ENCODE measurements at regions of chr1 and their contacts with region 1.

Region 1: DNA sequence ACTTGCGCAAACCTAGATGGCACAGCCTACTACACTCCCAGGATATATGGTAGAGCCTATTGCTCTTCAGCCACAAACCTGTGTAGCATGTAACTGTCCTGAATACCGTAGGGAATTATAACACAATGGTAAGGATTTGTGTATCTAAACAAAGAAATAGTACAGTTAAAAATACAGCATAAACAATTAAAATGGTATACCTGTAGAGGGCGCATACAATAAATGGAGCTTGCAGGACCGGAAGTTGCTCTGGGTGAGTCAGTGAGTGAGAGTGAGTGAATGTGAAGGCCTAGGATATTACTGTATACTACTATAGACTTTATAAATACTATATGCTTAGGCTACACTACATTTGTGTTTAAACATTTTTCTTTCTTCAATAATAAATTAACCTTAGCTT is 99.3 kb downstream of the PLD5 start:
- DNase-seq: peak; percentile 48
- H3K4me3 ChIP-seq: no peak overlapping the region
- H3K27ac ChIP-seq: no peak overlapping the region
- H3K4me1 ChIP-seq: peaks cover 12% of the 10 kb centered on the region
- H3K27me3 ChIP-seq: no peaks in the 10 kb centered on the region
- CTCF ChIP-seq: peak; percentile 18 to 34

Region 2: GRCh38 chr1:241902391-241903065 is 522.7 kb before region 1 on chr1:
- CTCF ChIA-PET with region 1: no interaction called
- dilution Hi-C with region 1: no loop called
- in situ Hi-C with region 1: no loop called
- intact Hi-C with region 1: no loop called
- DNase-seq: no peak
- H3K4me3 ChIP-seq: no peak overlapping the region
- H3K27ac ChIP-seq: no peak overlapping the region
- H3K4me1 ChIP-seq: no peaks in the 10 kb centered on the region
- H3K27me3 ChIP-seq: no peaks in the 10 kb centered on the region
- CTCF ChIP-seq: no peak

Region 3: DNA sequence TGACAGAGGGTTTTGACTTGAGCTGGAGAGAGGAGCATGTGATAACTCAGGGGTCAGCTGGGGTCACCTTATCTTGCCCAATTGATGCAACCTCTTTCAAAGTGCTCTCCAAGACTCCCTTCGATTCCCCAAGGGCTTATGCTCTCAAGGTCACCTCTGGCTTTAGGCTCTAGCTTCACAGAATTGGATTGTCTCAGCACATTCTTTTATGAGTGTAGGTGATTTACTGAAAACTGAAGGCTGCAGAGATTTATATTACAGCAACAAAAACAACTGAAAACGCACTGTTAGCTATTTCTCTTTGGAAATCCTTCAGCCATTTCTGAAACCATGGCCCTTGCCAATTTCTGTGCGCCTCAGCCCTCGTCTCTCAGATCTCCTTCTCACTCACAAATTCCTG is 391.8 kb before region 1 on chr1:
- CTCF ChIA-PET with region 1: no interaction called
- dilution Hi-C with region 1: no loop called
- in situ Hi-C with region 1: loop called in 1 of 2 experiments (anchors 25 kb)
- intact Hi-C with region 1: no loop called
- DNase-seq: no peak
- H3K4me3 ChIP-seq: no peak overlapping the region
- H3K27ac ChIP-seq: no peak overlapping the region
- H3K4me1 ChIP-seq: no peaks in the 10 kb centered on the region
- H3K27me3 ChIP-seq: no peaks in the 10 kb centered on the region
- CTCF ChIP-seq: no peak

Region 4: GRCh38 chr1:242205622-242206489 is 219.4 kb before region 1 on chr1:
- CTCF ChIA-PET with region 1: no interaction called
- dilution Hi-C with region 1: no loop called
- in situ Hi-C with region 1: no loop called
- intact Hi-C with region 1: loop called (anchors 10 kb)
- DNase-seq: peak; percentile 89
- H3K4me3 ChIP-seq: no peak overlapping the region
- H3K27ac ChIP-seq: peak overlapping the region; percentile 76
- H3K4me1 ChIP-seq: peaks cover 26% of the 10 kb centered on the region
- H3K27me3 ChIP-seq: no peaks in the 10 kb centered on the region
- CTCF ChIP-seq: no peak

Region 5: GRCh38 chr1:242377781-242378180 is 47.5 kb before region 1 on chr1:
- CTCF ChIA-PET with region 1: no interaction called
- dilution Hi-C with region 1: no loop called
- in situ Hi-C with region 1: no loop called
- intact Hi-C with region 1: no loop called
- DNase-seq: no peak
- H3K4me3 ChIP-seq: no peak overlapping the region
- H3K27ac ChIP-seq: no peak overlapping the region
- H3K4me1 ChIP-seq: no peaks in the 10 kb centered on the region
- H3K27me3 ChIP-seq: no peaks in the 10 kb centered on the region
- CTCF ChIP-seq: no peak